CD8-positive, alpha-beta memory T cell (primary cell): ENCODE measurements at regions of chr2 and their contacts with region 1.

Region 1: GRCh38 chr2:30711646-30712085 is 95.6 kb downstream of the CAPN13 start:
- DNase-seq: peak; percentile 69 to 90 (median 79)
- H3K4me3 ChIP-seq: no peak overlapping the region
- H3K4me3 Mint-ChIP-seq: no peak overlapping the region
- H3K27ac ChIP-seq: no peak overlapping the region
- H3K27ac Mint-ChIP-seq: no peak overlapping the region
- H3K4me1 ChIP-seq: peaks cover 5% of the 10 kb centered on the region
- H3K4me1 Mint-ChIP-seq: peaks cover 0 to 8% (median 7%) of the 10 kb centered on the region in 3 donors
- H3K27me3 ChIP-seq: no peaks in the 10 kb centered on the region
- H3K27me3 Mint-ChIP-seq: peaks cover 1 to 8% of the 10 kb centered on the region in 2 donors

Region 2: DNA sequence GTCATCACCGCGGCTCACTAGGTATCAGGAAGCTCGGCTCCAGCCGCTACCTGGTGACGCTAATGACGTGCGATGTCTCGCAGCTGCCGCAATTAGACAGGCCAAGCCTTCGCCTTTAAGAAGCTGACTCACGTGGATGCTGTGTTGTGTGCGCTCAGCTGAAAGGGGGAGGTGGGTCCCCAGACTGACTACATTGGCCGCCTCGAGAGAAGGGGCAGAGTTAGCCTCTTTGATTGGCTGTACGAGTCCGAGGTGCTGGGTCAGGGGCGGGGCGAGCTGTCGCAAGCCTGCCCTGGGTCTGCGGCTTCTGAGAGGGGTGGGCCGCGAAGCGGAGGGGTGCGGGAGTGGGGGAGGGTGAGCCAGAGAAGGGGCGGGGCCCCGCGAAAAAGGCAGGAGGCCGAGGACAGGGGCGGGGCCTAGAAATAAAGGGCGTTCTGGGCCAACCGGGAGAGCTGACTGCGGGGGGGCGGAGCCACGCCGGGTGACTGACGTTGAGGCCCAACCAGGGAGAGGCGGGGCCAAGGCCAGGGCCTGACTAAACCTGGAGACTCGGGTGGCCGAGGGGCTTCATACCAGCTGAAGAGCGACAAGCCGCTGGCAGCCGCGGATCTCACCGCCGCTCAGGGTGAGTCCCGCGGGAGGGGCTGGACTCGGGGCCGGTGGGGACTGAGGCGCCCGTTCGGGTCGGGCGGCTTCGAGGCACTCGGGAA is 565.1 kb before region 1 on chr2 and contains the start of gene YPEL5:
- CTCF ChIA-PET with region 1: interaction called, 17 read pairs
- POLR2A ChIA-PET with region 1: interaction called, 6 read pairs
- DNase-seq: peak; percentile 99 to 100 (median 99)
- H3K4me3 ChIP-seq: peak within 1 kb of the TSS; percentile 71
- H3K4me3 Mint-ChIP-seq: peak within 1 kb of the TSS; percentile 86 to 94 (median 90)
- H3K27ac ChIP-seq: peak within 1 kb of the TSS; percentile 100
- H3K27ac Mint-ChIP-seq: peak within 1 kb of the TSS; percentile 98 to 100 (median 99)
- H3K4me1 ChIP-seq: peaks cover 51% of the 10 kb centered on the region
- H3K4me1 Mint-ChIP-seq: peaks cover 45 to 57% (median 50%) of the 10 kb centered on the region in 3 donors
- H3K27me3 ChIP-seq: no peaks in the 10 kb centered on the region
- H3K27me3 Mint-ChIP-seq: peaks cover 0 to 7% of the 10 kb centered on the region in 2 donors
- total RNA-seq, gene YPEL5: 35.7 to 38.3 TPM

Region 3: DNA sequence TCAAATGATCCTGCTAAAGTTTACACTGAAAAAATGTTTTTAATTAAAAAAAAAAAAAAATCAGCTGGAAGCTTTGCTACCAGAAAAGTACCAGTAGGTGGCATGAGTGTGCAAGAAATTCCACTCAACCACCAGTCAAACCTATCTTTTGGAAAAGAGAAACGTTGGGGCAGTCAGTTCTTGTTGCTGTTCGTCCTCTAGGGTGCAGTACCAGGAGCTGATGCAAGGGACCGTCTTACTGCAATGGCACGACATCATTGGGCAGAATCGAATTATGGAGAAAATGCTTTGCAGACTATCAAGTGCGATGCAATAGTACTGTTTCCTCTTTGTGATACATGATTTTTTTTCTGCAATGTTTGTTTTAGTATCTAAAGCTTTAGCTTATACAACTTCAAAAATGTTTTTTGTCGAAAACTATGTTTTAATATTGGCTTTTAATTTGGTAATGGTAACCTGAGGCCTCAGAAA is 546.6 kb before region 1 on chr2:
- CTCF ChIA-PET with region 1: interaction called, 292 read pairs
- POLR2A ChIA-PET with region 1: interaction called, 6 read pairs
- DNase-seq: peak in 4 of 5 donors; percentile 43 to 81 (median 80)
- H3K4me3 ChIP-seq: no peak overlapping the region
- H3K4me3 Mint-ChIP-seq: peak overlapping the region in 1 of 7 donors; percentile 35
- H3K27ac ChIP-seq: no peak overlapping the region
- H3K27ac Mint-ChIP-seq: peak overlapping the region in 1 of 8 donors; percentile 97
- H3K4me1 ChIP-seq: no peaks in the 10 kb centered on the region
- H3K4me1 Mint-ChIP-seq: peaks cover 5 to 14% (median 10%) of the 10 kb centered on the region in 3 donors
- H3K27me3 ChIP-seq: no peaks in the 10 kb centered on the region
- H3K27me3 Mint-ChIP-seq: peaks cover 0 to 8% of the 10 kb centered on the region in 2 donors

Region 4: GRCh38 chr2:30231212-30231995 is 480.3 kb before region 1 on chr2 and contains the start of gene LBH:
- CTCF ChIA-PET with region 1: interaction called, 14 read pairs
- POLR2A ChIA-PET with region 1: interaction called, 3 read pairs
- DNase-seq: peak; percentile 85 to 96 (median 87)
- H3K4me3 ChIP-seq: peak within 1 kb of the TSS; percentile 88
- H3K4me3 Mint-ChIP-seq: peak within 1 kb of the TSS; percentile 88 to 96 (median 94)
- H3K27ac ChIP-seq: peak within 1 kb of the TSS; percentile 97
- H3K27ac Mint-ChIP-seq: peak within 1 kb of the TSS; percentile 86 to 98 (median 94)
- H3K4me1 ChIP-seq: peaks cover 54% of the 10 kb centered on the region
- H3K4me1 Mint-ChIP-seq: peaks cover 56 to 68% (median 65%) of the 10 kb centered on the region in 3 donors
- H3K27me3 ChIP-seq: no peaks in the 10 kb centered on the region
- H3K27me3 Mint-ChIP-seq: peaks cover 0 to 7% of the 10 kb centered on the region in 2 donors
- total RNA-seq, gene LBH: 115 to 121 TPM

Region 5: GRCh38 chr2:30325600-30326328 is 385.9 kb before region 1 on chr2:
- CTCF ChIA-PET with region 1: no interaction called
- POLR2A ChIA-PET with region 1: no interaction called
- DNase-seq: peak in 1 of 5 donors; percentile 19
- H3K4me3 ChIP-seq: no peak overlapping the region
- H3K4me3 Mint-ChIP-seq: no peak overlapping the region
- H3K27ac ChIP-seq: no peak overlapping the region
- H3K27ac Mint-ChIP-seq: peak overlapping the region in 7 of 8 donors; percentile 5 to 60 (median 32)
- H3K4me1 ChIP-seq: peaks cover 7% of the 10 kb centered on the region
- H3K4me1 Mint-ChIP-seq: peaks cover 1 to 14% (median 9%) of the 10 kb centered on the region in 3 donors
- H3K27me3 ChIP-seq: no peaks in the 10 kb centered on the region
- H3K27me3 Mint-ChIP-seq: no peaks in the 10 kb centered on the region

Region 6: GRCh38 chr2:30686000-30686399 is 25.7 kb before region 1 on chr2:
- CTCF ChIA-PET with region 1: interaction called, 12 read pairs
- POLR2A ChIA-PET with region 1: no interaction called
- DNase-seq: no peak
- H3K4me3 ChIP-seq: no peak overlapping the region
- H3K4me3 Mint-ChIP-seq: no peak overlapping the region
- H3K27ac ChIP-seq: no peak overlapping the region
- H3K27ac Mint-ChIP-seq: no peak overlapping the region
- H3K4me1 ChIP-seq: no peaks in the 10 kb centered on the region
- H3K4me1 Mint-ChIP-seq: no peaks in the 10 kb centered on the region
- H3K27me3 ChIP-seq: no peaks in the 10 kb centered on the region
- H3K27me3 Mint-ChIP-seq: peaks cover 3 to 6% of the 10 kb centered on the region in 2 donors

Region 7: GRCh38 chr2:30862054-30862651 is 150.5 kb after region 1 on chr2:
- CTCF ChIA-PET with region 1: interaction called, 15 read pairs
- POLR2A ChIA-PET with region 1: no interaction called
- DNase-seq: peak; percentile 8 to 66 (median 11)
- H3K4me3 ChIP-seq: no peak overlapping the region
- H3K4me3 Mint-ChIP-seq: no peak overlapping the region
- H3K27ac ChIP-seq: no peak overlapping the region
- H3K27ac Mint-ChIP-seq: no peak overlapping the region
- H3K4me1 ChIP-seq: no peaks in the 10 kb centered on the region
- H3K4me1 Mint-ChIP-seq: peaks cover 2 to 13% (median 7%) of the 10 kb centered on the region in 3 donors
- H3K27me3 ChIP-seq: no peaks in the 10 kb centered on the region
- H3K27me3 Mint-ChIP-seq: peaks cover 3 to 16% of the 10 kb centered on the region in 2 donors

Region 8: DNA sequence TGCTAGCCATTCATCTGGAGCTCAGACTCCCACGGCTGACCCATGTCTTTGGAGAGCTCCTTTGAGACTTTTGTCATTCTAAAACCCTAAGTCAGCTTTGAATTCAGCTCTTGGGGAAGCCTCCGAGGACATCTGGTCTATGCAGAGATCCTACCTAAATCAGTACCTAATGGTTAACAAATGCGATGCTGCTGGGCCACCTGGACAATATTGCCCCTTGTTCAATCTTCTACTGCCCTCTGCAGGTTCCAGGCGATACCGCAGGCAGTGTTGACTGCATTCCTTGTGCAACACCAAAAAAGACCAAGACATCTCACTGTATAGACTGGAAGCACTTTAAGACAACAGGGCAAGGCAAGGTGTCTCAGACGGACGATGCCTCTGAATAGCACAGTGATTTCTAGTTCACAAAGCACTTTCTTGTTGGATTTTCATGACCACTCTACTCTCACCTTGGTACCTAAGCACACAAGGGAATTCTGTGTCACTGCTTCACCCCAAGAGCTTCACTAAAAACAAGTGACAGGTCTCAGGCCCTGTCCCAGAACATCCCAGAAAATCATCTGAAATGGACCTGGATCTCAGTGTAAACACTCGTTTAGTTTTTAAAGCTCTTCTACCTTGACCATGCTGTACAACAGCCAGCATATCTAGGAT is 622.0 kb after region 1 on chr2:
- CTCF ChIA-PET with region 1: interaction called, 152 read pairs
- POLR2A ChIA-PET with region 1: no interaction called
- DNase-seq: peak; percentile 50 to 83 (median 61)
- H3K4me3 ChIP-seq: no peak overlapping the region
- H3K4me3 Mint-ChIP-seq: no peak overlapping the region
- H3K27ac ChIP-seq: no peak overlapping the region
- H3K27ac Mint-ChIP-seq: no peak overlapping the region
- H3K4me1 ChIP-seq: no peaks in the 10 kb centered on the region
- H3K4me1 Mint-ChIP-seq: no peaks in the 10 kb centered on the region
- H3K27me3 ChIP-seq: no peaks in the 10 kb centered on the region
- H3K27me3 Mint-ChIP-seq: peaks cover 0 to 8% of the 10 kb centered on the region in 2 donors